Endothelial cell of umbilical vein (primary cell): ENCODE measurements at regions of chr9 and their contacts with region 1.

Region 1: GRCh38 chr9:125843646-125844045 is 96.5 kb downstream of the PBX3 start:
- DNase-seq: no peak
- H3K4me3 ChIP-seq: no peak overlapping the region
- H3K27ac ChIP-seq: no peak overlapping the region
- H3K4me1 ChIP-seq: no peaks in the 10 kb centered on the region
- H3K27me3 ChIP-seq: no peaks in the 10 kb centered on the region
- CTCF ChIP-seq: no peak
- POLR2A ChIP-seq: no peak

Region 2: GRCh38 chr9:125650271-125650737 is 193.3 kb before region 1 on chr9:
- CTCF ChIA-PET with region 1: no interaction called
- POLR2A ChIA-PET with region 1: no interaction called
- dilution Hi-C with region 1: no loop called
- intact Hi-C with region 1: no loop called
- DNase-seq: peak; percentile 36
- H3K4me3 ChIP-seq: no peak overlapping the region
- H3K27ac ChIP-seq: peak overlapping the region; percentile 99
- H3K4me1 ChIP-seq: peaks cover 52% of the 10 kb centered on the region
- H3K27me3 ChIP-seq: no peaks in the 10 kb centered on the region
- CTCF ChIP-seq: no peak
- POLR2A ChIP-seq: no peak

Region 3: DNA sequence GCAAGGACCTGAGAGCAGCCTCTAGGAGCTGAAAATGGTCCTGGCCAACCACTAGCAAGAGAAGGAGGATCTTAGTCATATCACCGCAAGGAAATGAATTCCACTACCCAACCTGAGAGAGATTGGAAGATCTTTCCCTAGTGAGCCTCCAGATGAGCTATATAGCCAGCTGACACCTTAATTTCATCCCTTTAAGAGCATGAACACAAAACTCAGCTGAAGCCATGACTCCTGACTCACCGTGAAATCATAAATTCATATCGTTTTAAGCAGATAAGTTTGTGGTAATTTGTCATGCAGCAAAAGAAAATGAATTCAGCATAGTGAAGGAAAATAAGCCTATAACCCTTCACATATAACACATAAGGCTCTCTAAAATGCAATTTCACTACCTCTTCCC is 160.2 kb before region 1 on chr9:
- CTCF ChIA-PET with region 1: no interaction called
- POLR2A ChIA-PET with region 1: no interaction called
- dilution Hi-C with region 1: no loop called
- intact Hi-C with region 1: no loop called
- DNase-seq: no peak
- H3K4me3 ChIP-seq: no peak overlapping the region
- H3K27ac ChIP-seq: no peak overlapping the region
- H3K4me1 ChIP-seq: no peaks in the 10 kb centered on the region
- H3K27me3 ChIP-seq: no peaks in the 10 kb centered on the region
- CTCF ChIP-seq: no peak
- POLR2A ChIP-seq: no peak

Region 4: GRCh38 chr9:125829743-125830142 is 13.9 kb before region 1 on chr9:
- CTCF ChIA-PET with region 1: interaction called, 13 read pairs
- POLR2A ChIA-PET with region 1: no interaction called
- dilution Hi-C with region 1: no loop called
- intact Hi-C with region 1: no loop called
- DNase-seq: peak; percentile 50
- H3K4me3 ChIP-seq: peak overlapping the region in 2 of 3 experiments; percentile 14 to 29
- H3K27ac ChIP-seq: no peak overlapping the region
- H3K4me1 ChIP-seq: peaks cover 2% of the 10 kb centered on the region
- H3K27me3 ChIP-seq: no peaks in the 10 kb centered on the region
- CTCF ChIP-seq: no peak
- POLR2A ChIP-seq: no peak

Region 5: DNA sequence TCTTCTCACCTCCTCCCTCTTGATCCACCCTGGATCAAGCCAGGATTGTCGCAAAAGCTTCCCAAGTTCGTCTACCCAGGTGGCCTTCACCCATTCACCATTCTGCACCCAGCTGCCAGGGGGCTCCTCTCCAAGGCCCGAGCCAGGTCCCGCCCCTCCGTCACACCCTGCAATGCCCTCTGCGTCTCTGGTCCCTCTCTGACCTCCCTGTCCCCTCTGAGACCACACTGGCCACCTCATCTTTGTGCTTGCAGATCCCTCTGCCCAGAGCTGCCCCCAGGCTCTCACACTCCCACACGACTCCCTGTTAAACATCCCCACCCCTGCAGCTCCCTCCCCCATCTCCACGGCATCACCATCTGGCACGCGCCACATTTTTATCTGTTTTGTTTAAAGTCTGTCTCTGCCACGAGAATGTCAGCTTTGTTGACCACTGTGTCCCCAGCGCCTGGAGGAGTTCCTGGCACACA is 147.1 kb after region 1 on chr9:
- CTCF ChIA-PET with region 1: no interaction called
- POLR2A ChIA-PET with region 1: no interaction called
- dilution Hi-C with region 1: no loop called
- intact Hi-C with region 1: no loop called
- DNase-seq: no peak
- H3K4me3 ChIP-seq: no peak overlapping the region
- H3K27ac ChIP-seq: no peak overlapping the region
- H3K4me1 ChIP-seq: no peaks in the 10 kb centered on the region
- H3K27me3 ChIP-seq: no peaks in the 10 kb centered on the region
- CTCF ChIP-seq: no peak
- POLR2A ChIP-seq: no peak